Heart right ventricle (tissue), 16 donors: ENCODE measurements at regions of chr2 and their contacts with region 1.

Region 1: GRCh38 chr2:232854082-232854481 is 16.0 kb upstream of the SNORC start:
- DNase-seq: no peak
- ATAC-seq: no peak
- H3K4me3 ChIP-seq: no peak overlapping the region
- H3K27ac ChIP-seq: peak overlapping the region in 1 of 10 donors; percentile 10
- H3K4me1 ChIP-seq: peaks cover 0 to 16% (median 0%) of the 10 kb centered on the region in 9 donors
- H3K27me3 ChIP-seq: no peaks in the 10 kb centered on the region
- CTCF ChIP-seq: no peak

Region 2: DNA sequence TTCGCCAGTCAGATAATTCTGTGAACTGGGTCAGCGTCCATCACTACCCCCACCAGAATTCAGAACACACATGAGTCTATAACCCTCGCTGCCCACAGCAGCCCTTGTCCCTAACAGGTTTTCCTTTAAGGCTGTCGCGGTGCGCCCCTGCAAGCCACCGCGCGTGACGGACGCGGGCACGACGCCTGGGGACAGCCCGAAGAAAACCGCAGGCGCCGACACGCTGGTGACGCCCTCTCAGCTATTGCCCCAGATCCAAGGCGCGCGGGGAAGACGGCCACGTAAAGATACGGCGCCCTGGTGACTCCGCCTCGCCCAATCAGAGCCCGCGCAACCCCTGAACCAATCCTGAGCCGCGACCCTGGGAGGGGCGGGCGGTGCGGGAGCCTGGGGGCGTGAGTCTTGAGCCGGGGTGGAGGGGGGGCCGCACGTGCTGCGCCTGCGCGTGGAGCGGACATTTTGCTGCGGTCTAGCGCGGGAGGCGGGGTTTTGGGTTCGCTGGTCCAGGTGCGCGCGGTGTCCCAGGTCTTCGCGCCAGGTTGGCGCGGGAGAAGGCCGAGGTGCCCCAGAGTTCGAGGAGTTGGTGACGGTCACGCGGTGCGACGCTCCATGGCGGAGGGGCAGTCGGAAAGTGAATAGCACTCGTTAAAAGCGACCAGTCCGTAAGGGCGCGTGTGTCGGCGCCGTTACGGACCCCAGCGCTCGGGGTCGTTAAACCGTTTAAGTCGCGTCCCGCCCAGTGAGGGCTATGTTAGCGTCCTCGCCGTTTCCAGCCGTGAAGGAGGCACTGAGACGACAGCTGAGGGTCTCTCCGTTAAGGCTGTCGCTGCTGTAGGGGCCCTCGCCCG is 1339.8 kb before region 1 on chr2:
- intact Hi-C with region 1: no loop called
- DNase-seq: peak; percentile 98
- ATAC-seq: peak; percentile 99 to 100 (median 100)
- H3K4me3 ChIP-seq: peak overlapping the region; percentile 63 to 89 (median 78)
- H3K27ac ChIP-seq: peak overlapping the region; percentile 51 to 90 (median 87)
- H3K4me1 ChIP-seq: peaks cover 0 to 23% (median 12%) of the 10 kb centered on the region in 9 donors
- H3K27me3 ChIP-seq: no peaks in the 10 kb centered on the region
- CTCF ChIP-seq: no peak

Region 3: GRCh38 chr2:232795920-232796319 is 58.2 kb before region 1 on chr2:
- intact Hi-C with region 1: no loop called
- DNase-seq: no peak
- ATAC-seq: no peak
- H3K4me3 ChIP-seq: no peak overlapping the region
- H3K27ac ChIP-seq: no peak overlapping the region
- H3K4me1 ChIP-seq: no peaks in the 10 kb centered on the region
- H3K27me3 ChIP-seq: no peaks in the 10 kb centered on the region
- CTCF ChIP-seq: no peak

Region 4: GRCh38 chr2:232910376-232910775 is 56.3 kb after region 1 on chr2:
- intact Hi-C with region 1: no loop called
- DNase-seq: no peak
- ATAC-seq: no peak
- H3K4me3 ChIP-seq: no peak overlapping the region
- H3K27ac ChIP-seq: no peak overlapping the region
- H3K4me1 ChIP-seq: no peaks in the 10 kb centered on the region
- H3K27me3 ChIP-seq: peaks cover 0 to 39% (median 32%) of the 10 kb centered on the region in 7 donors
- CTCF ChIP-seq: no peak

Region 5: GRCh38 chr2:233033672-233034071 is 179.6 kb after region 1 on chr2:
- intact Hi-C with region 1: loop called in 1 of 10 experiments (anchors 10 kb)
- DNase-seq: no peak
- ATAC-seq: no peak
- H3K4me3 ChIP-seq: no peak overlapping the region
- H3K27ac ChIP-seq: no peak overlapping the region
- H3K4me1 ChIP-seq: no peaks in the 10 kb centered on the region
- H3K27me3 ChIP-seq: no peaks in the 10 kb centered on the region
- CTCF ChIP-seq: no peak

Region 6: GRCh38 chr2:233053928-233054784 is 200.1 kb after region 1 on chr2:
- intact Hi-C with region 1: loop called in 3 of 10 experiments (anchors 10 kb)
- DNase-seq: peak; percentile 47 to 70
- ATAC-seq: peak in 2 of 8 donors; percentile 50 to 55
- H3K4me3 ChIP-seq: no peak overlapping the region
- H3K27ac ChIP-seq: no peak overlapping the region
- H3K4me1 ChIP-seq: peaks cover 0 to 35% (median 10%) of the 10 kb centered on the region in 9 donors
- H3K27me3 ChIP-seq: peaks cover 0 to 30% (median 0%) of the 10 kb centered on the region in 7 donors
- CTCF ChIP-seq: peak; percentile 74 to 96 (median 87)

Region 7: GRCh38 chr2:233152541-233152940 is 298.5 kb after region 1 on chr2:
- intact Hi-C with region 1: loop called in 1 of 10 experiments (anchors 10 kb)
- DNase-seq: peak; percentile 72 to 77
- ATAC-seq: peak; percentile 84 to 98 (median 93)
- H3K4me3 ChIP-seq: no peak overlapping the region
- H3K27ac ChIP-seq: no peak overlapping the region
- H3K4me1 ChIP-seq: peaks cover 0 to 9% (median 0%) of the 10 kb centered on the region in 9 donors
- H3K27me3 ChIP-seq: no peaks in the 10 kb centered on the region
- CTCF ChIP-seq: no peak